ENCODE measurements at regions of chr17 and their contacts with region 1.

Region 1: GRCh38 chr17:36566081-36566480 is 21.4 kb downstream of the GGNBP2 start:
- DNase-seq: no peak
- H3K4me3 ChIP-seq: no peak overlapping the region
- H3K4me3 Mint-ChIP-seq: no peak overlapping the region
- H3K27ac ChIP-seq: no peak overlapping the region
- H3K27ac Mint-ChIP-seq: peak overlapping the region in 4 of 7 donors; percentile 4 to 38 (median 25)
- H3K4me1 ChIP-seq: peaks cover 9% of the 10 kb centered on the region
- H3K4me1 Mint-ChIP-seq: peaks cover 11 to 32% (median 17%) of the 10 kb centered on the region in 4 donors
- H3K27me3 ChIP-seq: no peaks in the 10 kb centered on the region
- H3K27me3 Mint-ChIP-seq: no peaks in the 10 kb centered on the region

Region 2: GRCh38 chr17:36463916-36464315 is 102.2 kb before region 1 on chr17:
- CTCF ChIA-PET with region 1: no interaction called
- POLR2A ChIA-PET with region 1: no interaction called
- intact Hi-C with region 1: no loop called
- DNase-seq: peak; percentile 16 to 55 (median 25)
- H3K4me3 ChIP-seq: no peak overlapping the region
- H3K4me3 Mint-ChIP-seq: no peak overlapping the region
- H3K27ac ChIP-seq: no peak overlapping the region
- H3K27ac Mint-ChIP-seq: no peak overlapping the region
- H3K4me1 ChIP-seq: no peaks in the 10 kb centered on the region
- H3K4me1 Mint-ChIP-seq: no peaks in the 10 kb centered on the region
- H3K27me3 ChIP-seq: peaks cover 8% of the 10 kb centered on the region
- H3K27me3 Mint-ChIP-seq: peaks cover 40 to 52% of the 10 kb centered on the region in 2 donors

Region 3: DNA sequence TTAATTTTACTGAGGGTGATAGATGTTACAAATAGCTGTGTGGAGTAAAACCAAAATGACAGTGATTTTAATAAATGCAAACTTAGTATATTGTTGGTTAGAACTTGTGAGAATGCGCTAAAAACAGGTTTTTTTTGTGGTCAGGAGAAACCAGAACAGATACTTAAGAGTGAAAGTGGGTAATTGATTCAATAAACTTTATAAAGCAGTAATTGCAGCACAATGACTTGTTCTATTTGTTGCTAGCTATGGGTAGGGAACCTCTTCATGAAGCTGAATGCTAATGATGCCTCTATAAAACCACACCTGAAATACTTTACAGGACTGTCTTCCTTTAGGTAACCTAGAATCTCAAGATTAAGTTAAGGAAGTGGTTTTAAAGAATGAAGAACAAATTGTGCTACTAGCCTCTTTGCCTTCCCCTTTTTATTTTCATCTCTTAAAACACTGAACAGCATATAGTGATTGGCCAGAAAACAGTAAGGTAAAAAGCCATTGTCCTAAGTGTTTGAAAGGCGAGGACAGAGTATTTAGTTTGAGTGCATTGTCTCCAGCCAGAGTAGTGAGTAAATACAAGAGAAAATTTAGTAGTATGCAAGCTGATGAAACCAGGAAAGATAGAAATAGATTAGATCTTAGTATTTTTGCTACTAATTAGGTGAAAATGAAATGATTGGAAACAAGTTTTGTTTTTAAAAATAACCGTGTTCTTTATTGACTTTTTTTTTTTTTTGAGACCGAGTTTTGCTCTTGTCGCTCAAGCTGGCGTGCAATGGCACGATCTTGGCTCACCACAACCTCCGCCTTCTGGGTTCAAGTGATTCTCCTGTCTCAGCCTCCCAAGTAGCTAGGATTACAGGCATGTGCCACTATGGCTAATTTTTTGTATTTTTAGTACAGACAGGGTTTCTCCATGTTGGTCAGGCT is 15.3 kb before region 1 on chr17:
- CTCF ChIA-PET with region 1: interaction called, 3 read pairs
- POLR2A ChIA-PET with region 1: interaction called, 9 read pairs
- intact Hi-C with region 1: loop called (anchors 2 kb)
- DNase-seq: peak in 4 of 5 donors; percentile 41 to 60 (median 52)
- H3K4me3 ChIP-seq: no peak overlapping the region
- H3K4me3 Mint-ChIP-seq: peak overlapping the region; percentile 13 to 68 (median 63)
- H3K27ac ChIP-seq: no peak overlapping the region
- H3K27ac Mint-ChIP-seq: peak overlapping the region; percentile 45 to 97 (median 79)
- H3K4me1 ChIP-seq: peaks cover 93% of the 10 kb centered on the region
- H3K4me1 Mint-ChIP-seq: peaks cover 43 to 80% (median 62%) of the 10 kb centered on the region in 4 donors
- H3K27me3 ChIP-seq: no peaks in the 10 kb centered on the region
- H3K27me3 Mint-ChIP-seq: no peaks in the 10 kb centered on the region

Region 4: GRCh38 chr17:36657763-36658490 is 91.8 kb after region 1 on chr17:
- CTCF ChIA-PET with region 1: no interaction called
- POLR2A ChIA-PET with region 1: no interaction called
- intact Hi-C with region 1: no loop called
- DNase-seq: no peak
- H3K4me3 ChIP-seq: no peak overlapping the region
- H3K4me3 Mint-ChIP-seq: peak overlapping the region in 7 of 8 donors; percentile 25 to 77 (median 67)
- H3K27ac ChIP-seq: no peak overlapping the region
- H3K27ac Mint-ChIP-seq: no peak overlapping the region
- H3K4me1 ChIP-seq: peaks cover 12% of the 10 kb centered on the region
- H3K4me1 Mint-ChIP-seq: peaks cover 4 to 6% (median 5%) of the 10 kb centered on the region in 4 donors
- H3K27me3 ChIP-seq: peaks cover 10% of the 10 kb centered on the region
- H3K27me3 Mint-ChIP-seq: peaks cover 24 to 41% of the 10 kb centered on the region in 2 donors

Region 5: DNA sequence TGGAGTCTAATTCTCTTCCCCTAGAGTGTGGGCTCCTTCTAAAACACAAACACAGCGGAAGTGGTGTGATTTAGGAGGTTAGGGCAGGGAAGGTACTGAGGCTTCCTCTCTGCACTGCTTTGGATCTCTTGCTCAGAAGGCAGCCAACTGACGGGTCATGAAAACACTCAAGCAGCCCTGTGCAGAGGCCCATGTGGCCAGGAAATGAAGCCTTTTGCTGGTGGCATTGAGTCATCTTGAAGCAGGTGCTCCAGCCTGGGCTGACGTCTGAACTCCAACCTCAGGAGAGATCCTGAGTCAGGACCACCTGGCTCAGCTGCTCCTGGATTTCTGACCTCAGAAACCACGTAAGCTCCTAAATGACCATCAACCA is 108.2 kb after region 1 on chr17:
- CTCF ChIA-PET with region 1: no interaction called
- POLR2A ChIA-PET with region 1: no interaction called
- intact Hi-C with region 1: no loop called
- DNase-seq: peak; percentile 50 to 74 (median 66)
- H3K4me3 ChIP-seq: no peak overlapping the region
- H3K4me3 Mint-ChIP-seq: peak overlapping the region; percentile 55 to 89 (median 76)
- H3K27ac ChIP-seq: peak overlapping the region; percentile 34
- H3K27ac Mint-ChIP-seq: peak overlapping the region; percentile 49 to 92 (median 89)
- H3K4me1 ChIP-seq: peaks cover 57% of the 10 kb centered on the region
- H3K4me1 Mint-ChIP-seq: peaks cover 37 to 59% (median 45%) of the 10 kb centered on the region in 4 donors
- H3K27me3 ChIP-seq: no peaks in the 10 kb centered on the region
- H3K27me3 Mint-ChIP-seq: no peaks in the 10 kb centered on the region

Region 6: GRCh38 chr17:36837195-36837938 is 271.3 kb after region 1 on chr17:
- CTCF ChIA-PET with region 1: no interaction called
- POLR2A ChIA-PET with region 1: no interaction called
- intact Hi-C with region 1: no loop called
- DNase-seq: no peak
- H3K4me3 ChIP-seq: no peak overlapping the region
- H3K4me3 Mint-ChIP-seq: no peak overlapping the region
- H3K27ac ChIP-seq: no peak overlapping the region
- H3K27ac Mint-ChIP-seq: no peak overlapping the region
- H3K4me1 ChIP-seq: no peaks in the 10 kb centered on the region
- H3K4me1 Mint-ChIP-seq: no peaks in the 10 kb centered on the region
- H3K27me3 ChIP-seq: no peaks in the 10 kb centered on the region
- H3K27me3 Mint-ChIP-seq: peaks cover 5% of the 10 kb centered on the region in 2 donors